Naive thymus-derived CD4-positive, alpha-beta T cell (primary cell): ENCODE measurements at regions of chr10 and their contacts with region 1.

Region 1: DNA sequence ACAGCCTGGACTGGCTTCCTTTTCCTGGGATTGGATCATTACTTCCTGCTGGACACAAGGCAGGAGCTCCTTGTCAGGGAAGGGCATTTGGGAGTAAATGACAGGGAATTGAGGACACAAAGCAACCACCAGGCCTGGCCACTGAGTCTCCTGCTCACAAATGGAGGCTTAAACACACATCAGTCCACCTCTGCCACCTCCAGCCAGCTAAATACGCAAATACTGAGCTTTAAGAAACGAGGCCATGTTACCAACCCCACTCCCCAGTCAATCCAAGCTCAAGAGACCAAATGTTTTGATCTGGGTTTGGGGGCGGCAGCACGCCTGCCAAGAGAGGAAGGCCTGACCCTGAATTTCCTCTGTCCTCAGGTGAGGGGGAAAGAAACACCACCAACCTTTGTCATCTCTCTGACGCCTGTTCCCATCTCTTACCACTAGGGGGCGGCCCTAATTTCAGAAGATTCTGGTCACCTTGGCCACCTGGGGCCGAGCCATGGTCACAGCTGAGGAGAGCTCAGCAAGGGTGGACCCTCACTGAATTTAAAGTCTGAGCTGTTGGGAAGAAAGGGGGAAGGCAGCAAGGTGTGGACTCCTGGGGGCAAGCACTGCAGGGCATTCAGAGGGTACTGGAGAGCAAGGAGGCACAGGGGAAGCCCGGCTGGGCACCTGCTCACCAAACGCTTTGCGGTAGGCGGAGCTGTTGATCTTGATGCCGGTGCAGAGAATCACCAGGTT is 16.5 kb downstream of the AIFM2 start:
- DNase-seq: peak; percentile 23 to 66 (median 54)
- ATAC-seq: peak; percentile 82
- H3K4me3 ChIP-seq: no peak overlapping the region
- H3K4me3 Mint-ChIP-seq: no peak overlapping the region
- H3K27ac ChIP-seq: no peak overlapping the region
- H3K27ac Mint-ChIP-seq: no peak overlapping the region
- H3K4me1 ChIP-seq: peaks cover 0 to 6% of the 10 kb centered on the region in 2 donors
- H3K4me1 Mint-ChIP-seq: peaks cover 4 to 10% (median 5%) of the 10 kb centered on the region in 7 donors
- H3K27me3 ChIP-seq: no peaks in the 10 kb centered on the region
- H3K27me3 Mint-ChIP-seq: no peaks in the 10 kb centered on the region

Region 2: DNA sequence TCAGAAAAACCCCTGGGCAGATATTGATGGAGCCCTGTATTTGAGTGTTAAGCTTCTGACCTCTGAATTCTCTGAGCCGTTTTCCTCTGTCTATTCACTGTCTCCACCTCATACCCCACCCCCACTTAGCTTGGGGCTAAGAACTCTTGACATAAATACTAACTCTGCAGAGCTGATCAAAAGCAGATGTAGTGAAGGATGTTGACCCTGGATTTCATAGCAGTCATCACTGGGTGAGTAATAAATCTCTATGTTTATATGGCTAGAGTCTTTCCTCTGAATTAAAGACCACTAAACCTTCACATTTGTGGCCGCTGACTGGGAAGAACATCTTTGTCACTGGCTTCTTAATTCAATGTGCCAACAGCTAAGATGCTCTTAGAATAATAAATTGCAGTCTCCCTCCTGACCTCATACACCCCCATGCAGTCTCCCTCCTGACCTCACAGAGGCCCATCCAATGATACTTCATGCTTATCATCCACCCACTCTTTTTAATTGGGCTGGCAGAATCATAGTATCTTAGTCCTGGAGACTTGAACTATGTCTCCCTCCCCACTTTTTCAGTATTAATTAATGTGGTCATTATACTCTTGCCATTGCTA is 141.5 kb before region 1 on chr10:
- CTCF ChIA-PET with region 1: no interaction called
- POLR2A ChIA-PET with region 1: no interaction called
- intact Hi-C with region 1: no loop called
- DNase-seq: no peak
- ATAC-seq: no peak
- H3K4me3 ChIP-seq: no peak overlapping the region
- H3K4me3 Mint-ChIP-seq: no peak overlapping the region
- H3K27ac ChIP-seq: no peak overlapping the region
- H3K27ac Mint-ChIP-seq: no peak overlapping the region
- H3K4me1 ChIP-seq: no peaks in the 10 kb centered on the region
- H3K4me1 Mint-ChIP-seq: peaks cover 0 to 7% (median 0%) of the 10 kb centered on the region in 7 donors
- H3K27me3 ChIP-seq: no peaks in the 10 kb centered on the region
- H3K27me3 Mint-ChIP-seq: peaks cover 32 to 56% (median 44%) of the 10 kb centered on the region in 5 donors

Region 3: DNA sequence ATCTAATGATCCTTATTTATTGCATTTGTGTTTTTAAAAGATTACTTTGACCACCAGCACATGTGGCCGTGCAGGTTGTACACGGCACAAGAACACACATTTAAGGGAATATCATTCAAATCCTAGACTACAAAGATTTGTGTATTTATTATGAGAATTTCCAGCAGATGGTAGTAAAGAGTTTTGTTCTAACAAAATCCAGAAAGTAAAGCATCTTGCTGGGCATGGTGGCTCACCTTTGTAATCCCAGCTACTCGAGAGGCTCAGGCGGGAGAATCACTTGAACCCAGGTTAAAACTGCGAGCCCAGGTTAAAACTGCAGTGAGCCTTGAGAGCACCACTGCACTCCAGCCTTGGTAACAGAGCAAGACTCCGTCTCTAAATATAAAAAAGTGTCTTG is 31.9 kb before region 1 on chr10:
- CTCF ChIA-PET with region 1: interaction called, 7 read pairs
- POLR2A ChIA-PET with region 1: no interaction called
- intact Hi-C with region 1: loop called in 1 of 2 experiments (anchors 1 kb)
- DNase-seq: peak in 5 of 9 donors; percentile 5 to 18 (median 9)
- ATAC-seq: no peak
- H3K4me3 ChIP-seq: no peak overlapping the region
- H3K4me3 Mint-ChIP-seq: no peak overlapping the region
- H3K27ac ChIP-seq: no peak overlapping the region
- H3K27ac Mint-ChIP-seq: no peak overlapping the region
- H3K4me1 ChIP-seq: no peaks in the 10 kb centered on the region
- H3K4me1 Mint-ChIP-seq: peaks cover 0 to under 1% (median 0%) of the 10 kb centered on the region in 7 donors
- H3K27me3 ChIP-seq: no peaks in the 10 kb centered on the region
- H3K27me3 Mint-ChIP-seq: peaks cover 0 to 12% (median 0%) of the 10 kb centered on the region in 5 donors

Region 4: GRCh38 chr10:70093335-70093944 is 22.7 kb before region 1 on chr10:
- CTCF ChIA-PET with region 1: interaction called, 40 read pairs
- POLR2A ChIA-PET with region 1: interaction called, 3 read pairs
- intact Hi-C with region 1: no loop called
- DNase-seq: peak in 7 of 9 donors; percentile 28 to 52 (median 42)
- ATAC-seq: peak; percentile 75
- H3K4me3 ChIP-seq: peak overlapping the region; percentile 73
- H3K4me3 Mint-ChIP-seq: peak overlapping the region; percentile 70 to 96 (median 89)
- H3K27ac ChIP-seq: peak overlapping the region; percentile 79
- H3K27ac Mint-ChIP-seq: peak overlapping the region; percentile 77 to 99 (median 93)
- H3K4me1 ChIP-seq: peaks cover 17 to 29% of the 10 kb centered on the region in 2 donors
- H3K4me1 Mint-ChIP-seq: peaks cover 18 to 64% (median 57%) of the 10 kb centered on the region in 7 donors
- H3K27me3 ChIP-seq: no peaks in the 10 kb centered on the region
- H3K27me3 Mint-ChIP-seq: no peaks in the 10 kb centered on the region

Region 5: DNA sequence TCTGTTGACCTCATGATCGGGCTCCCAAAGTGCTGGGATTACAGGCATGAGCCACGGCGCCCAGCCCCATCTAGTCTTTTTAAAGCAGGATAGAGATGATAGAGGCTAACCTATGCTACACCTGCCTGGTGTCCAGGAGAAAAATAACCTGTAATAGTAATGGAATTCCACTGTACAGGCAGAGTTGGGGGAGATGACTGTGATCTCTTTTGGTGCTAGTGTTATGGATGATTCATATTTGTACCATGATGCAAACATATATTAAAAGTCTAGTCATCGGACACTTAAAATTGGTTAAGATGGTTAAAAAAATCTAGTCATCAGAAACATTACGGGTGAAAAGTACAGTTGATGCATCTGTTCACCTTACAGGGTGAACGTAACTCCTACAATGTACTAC is 60.3 kb after region 1 on chr10:
- CTCF ChIA-PET with region 1: no interaction called
- POLR2A ChIA-PET with region 1: no interaction called
- intact Hi-C with region 1: no loop called
- DNase-seq: no peak
- ATAC-seq: no peak
- H3K4me3 ChIP-seq: no peak overlapping the region
- H3K4me3 Mint-ChIP-seq: no peak overlapping the region
- H3K27ac ChIP-seq: no peak overlapping the region
- H3K27ac Mint-ChIP-seq: no peak overlapping the region
- H3K4me1 ChIP-seq: peaks cover 13 to 22% of the 10 kb centered on the region in 2 donors
- H3K4me1 Mint-ChIP-seq: peaks cover 12 to 25% (median 22%) of the 10 kb centered on the region in 7 donors
- H3K27me3 ChIP-seq: no peaks in the 10 kb centered on the region
- H3K27me3 Mint-ChIP-seq: peaks cover 0 to 26% (median 10%) of the 10 kb centered on the region in 5 donors

Region 6: GRCh38 chr10:70197235-70197945 is 81.3 kb after region 1 on chr10:
- CTCF ChIA-PET with region 1: interaction called, 13 read pairs
- POLR2A ChIA-PET with region 1: no interaction called
- intact Hi-C with region 1: loop called in 1 of 2 experiments (anchors 1 kb)
- DNase-seq: no peak
- ATAC-seq: peak; percentile 42
- H3K4me3 ChIP-seq: no peak overlapping the region
- H3K4me3 Mint-ChIP-seq: no peak overlapping the region
- H3K27ac ChIP-seq: no peak overlapping the region
- H3K27ac Mint-ChIP-seq: peak overlapping the region in 4 of 9 donors; percentile 18 to 36 (median 32)
- H3K4me1 ChIP-seq: peaks cover 0 to 11% of the 10 kb centered on the region in 2 donors
- H3K4me1 Mint-ChIP-seq: peaks cover 0 to 27% (median 10%) of the 10 kb centered on the region in 7 donors
- H3K27me3 ChIP-seq: no peaks in the 10 kb centered on the region
- H3K27me3 Mint-ChIP-seq: no peaks in the 10 kb centered on the region

Region 7: DNA sequence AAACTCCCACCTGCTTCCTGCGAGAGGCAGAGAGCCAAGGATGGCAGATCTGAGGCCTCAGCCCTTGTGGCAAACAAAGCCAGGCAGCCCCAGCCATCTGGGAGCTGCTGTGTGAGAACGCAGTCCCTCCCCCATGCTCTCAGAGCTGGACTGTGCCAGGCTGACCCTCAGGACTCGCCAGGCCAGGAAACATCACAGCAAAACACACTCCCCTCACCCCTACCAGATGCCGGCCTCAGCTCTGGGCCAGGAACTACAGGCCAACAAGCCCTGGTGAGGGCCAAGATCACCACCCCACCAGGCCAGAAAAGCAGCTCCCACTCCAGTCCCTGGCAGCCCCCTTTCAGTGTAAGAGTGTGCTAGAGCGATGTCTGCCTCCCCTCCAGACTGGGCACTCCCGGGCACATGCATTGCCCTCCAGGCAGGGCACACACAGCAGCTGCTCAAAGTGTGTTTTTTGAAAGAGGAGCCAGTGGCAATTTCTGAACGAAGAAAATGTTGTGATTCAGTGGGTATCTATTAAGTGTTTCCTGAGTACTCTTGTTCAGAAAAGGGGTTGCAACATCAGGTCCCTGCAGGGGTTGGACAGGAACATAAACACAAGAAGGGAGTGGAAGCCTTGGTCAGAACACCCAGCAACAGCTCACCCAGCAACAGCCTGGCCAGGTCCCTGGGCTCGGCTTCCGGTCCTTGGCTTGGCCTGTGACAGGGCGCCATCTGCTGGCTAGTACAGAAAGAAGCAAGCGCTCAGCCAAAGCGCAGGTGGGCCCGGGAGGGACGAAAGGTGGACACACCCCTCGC is 248.1 kb after region 1 on chr10:
- CTCF ChIA-PET with region 1: interaction called, 11 read pairs
- POLR2A ChIA-PET with region 1: no interaction called
- intact Hi-C with region 1: no loop called
- DNase-seq: peak; percentile 62 to 83 (median 77)
- ATAC-seq: peak; percentile 98
- H3K4me3 ChIP-seq: no peak overlapping the region
- H3K4me3 Mint-ChIP-seq: peak overlapping the region in 5 of 10 donors; percentile 23 to 71 (median 42)
- H3K27ac ChIP-seq: no peak overlapping the region
- H3K27ac Mint-ChIP-seq: peak overlapping the region in 4 of 9 donors; percentile 25 to 50 (median 36)
- H3K4me1 ChIP-seq: peaks cover 0 to 6% of the 10 kb centered on the region in 2 donors
- H3K4me1 Mint-ChIP-seq: peaks cover 7 to 12% (median 9%) of the 10 kb centered on the region in 7 donors
- H3K27me3 ChIP-seq: no peaks in the 10 kb centered on the region
- H3K27me3 Mint-ChIP-seq: peaks cover 0 to 3% (median 0%) of the 10 kb centered on the region in 5 donors